ENCODE measurements at regions of chr6 and their contacts with region 1.

Region 1: GRCh38 chr6:137415127-137415833 is 78.9 kb downstream of the OLIG3 start:
- DNase-seq: peak; percentile 48 to 76 (median 60)
- ATAC-seq: peak; percentile 90 to 96 (median 94)
- H3K4me3 ChIP-seq: peak overlapping the region; percentile 28 to 54 (median 34)
- H3K27ac ChIP-seq: peak overlapping the region in 2 of 3 donors; percentile 58 to 79
- H3K4me1 ChIP-seq: peaks cover 0 to 3% (median 0%) of the 10 kb centered on the region in 4 donors
- H3K27me3 ChIP-seq: no peaks in the 10 kb centered on the region
- CTCF ChIP-seq: peak; percentile 68 to 83 (median 77)
- POLR2A ChIP-seq: no peak

Region 2: DNA sequence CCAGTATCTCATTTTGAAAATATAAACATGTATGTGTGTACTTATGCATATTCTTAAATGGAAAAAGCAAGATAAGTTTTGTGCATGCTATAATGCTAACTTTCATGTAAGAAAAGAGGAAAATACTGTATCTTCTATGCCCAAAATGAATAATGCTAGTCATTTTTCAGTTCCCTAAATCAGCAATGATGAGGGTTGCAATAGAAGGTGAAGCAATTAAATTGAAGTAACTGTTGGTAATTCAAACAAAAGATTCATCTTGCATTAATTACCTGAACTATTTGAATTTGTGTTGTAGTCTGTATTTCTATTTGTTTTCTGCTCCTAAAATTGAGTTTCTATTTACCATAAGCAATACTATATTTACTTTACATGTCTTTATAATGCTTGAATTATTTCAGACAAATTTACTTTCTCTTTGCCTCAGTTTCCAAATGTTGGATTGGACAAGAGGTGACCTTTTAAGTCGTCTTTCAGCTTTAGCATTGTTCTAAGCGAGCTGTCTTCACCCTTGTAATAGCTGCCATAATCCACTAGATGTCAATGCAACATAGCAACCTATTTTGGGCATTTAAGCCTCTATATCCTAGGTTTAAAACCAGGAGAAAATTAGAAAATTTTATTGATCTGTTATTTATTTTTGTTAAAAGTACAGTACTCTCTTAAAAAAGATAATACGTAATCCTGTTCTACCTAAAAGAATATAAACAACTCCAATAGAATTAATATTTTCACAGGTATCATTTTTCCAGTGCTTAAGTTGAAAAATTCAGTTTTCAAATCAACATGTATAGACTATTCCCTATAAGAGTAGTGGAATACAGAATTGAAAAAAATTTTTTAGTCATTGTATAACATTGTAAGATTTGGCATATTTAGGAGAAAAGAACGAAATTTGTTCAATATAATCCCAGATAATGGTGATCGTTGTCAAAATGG is 143.8 kb before region 1 on chr6:
- intact Hi-C with region 1: loop called in 1 of 2 experiments (anchors 10 kb)
- DNase-seq: no peak
- ATAC-seq: peak; percentile 88 to 95 (median 90)
- H3K4me3 ChIP-seq: no peak overlapping the region
- H3K27ac ChIP-seq: no peak overlapping the region
- H3K4me1 ChIP-seq: no peaks in the 10 kb centered on the region
- H3K27me3 ChIP-seq: no peaks in the 10 kb centered on the region
- CTCF ChIP-seq: peak; percentile 84 to 94 (median 87)
- POLR2A ChIP-seq: no peak